ENCODE measurements at regions of chr12 and their contacts with region 1.

Region 1: GRCh38 chr12:56189176-56189917 is at the start of gene SMARCC2:
- DNase-seq: peak; percentile 95
- H3K4me3 ChIP-seq: peak within 1 kb of the TSS; percentile 83
- H3K27ac ChIP-seq: peak within 1 kb of the TSS; percentile 82
- H3K4me1 ChIP-seq: peaks cover 13% of the 10 kb centered on the region
- H3K27me3 ChIP-seq: no peaks in the 10 kb centered on the region
- CTCF ChIP-seq: peak; percentile 74
- total RNA-seq, gene SMARCC2: 133 and 140 TPM in 2 replicates

Region 2: GRCh38 chr12:56117778-56118687 is 71.3 kb before region 1 on chr12 and contains the start of gene ZC3H10:
- CTCF ChIA-PET with region 1: interaction called, 17 read pairs
- POLR2A ChIA-PET with region 1: no interaction called
- intact Hi-C with region 1: loop called (anchors 2 kb)
- DNase-seq: peak; percentile 99
- H3K4me3 ChIP-seq: peak within 1 kb of the TSS; percentile 71
- H3K27ac ChIP-seq: peak within 1 kb of the TSS; percentile 95
- H3K4me1 ChIP-seq: peaks cover 13% of the 10 kb centered on the region
- H3K27me3 ChIP-seq: no peaks in the 10 kb centered on the region
- CTCF ChIP-seq: peak; percentile 61; the same call in 1 of the 2 replicates
- total RNA-seq, gene ZC3H10: 11.8 and 14.4 TPM in 2 replicates

Region 3: GRCh38 chr12:56224102-56224701 is 34.9 kb after region 1 on chr12 and contains the start of gene NABP2:
- CTCF ChIA-PET with region 1: interaction called, 16 read pairs
- POLR2A ChIA-PET with region 1: no interaction called
- intact Hi-C with region 1: loop called (anchors 1 kb)
- DNase-seq: peak; percentile 99
- H3K4me3 ChIP-seq: peak within 1 kb of the TSS; percentile 65
- H3K27ac ChIP-seq: peak within 1 kb of the TSS; percentile 72
- H3K4me1 ChIP-seq: peaks cover 5% of the 10 kb centered on the region
- H3K27me3 ChIP-seq: no peaks in the 10 kb centered on the region
- CTCF ChIP-seq: peak; percentile 98
- total RNA-seq, gene NABP2: 67.5 and 73.2 TPM in 2 replicates

Region 4: GRCh38 chr12:56266693-56267442 is 77.5 kb after region 1 on chr12 and contains the start of gene COQ10A:
- CTCF ChIA-PET with region 1: no interaction called
- POLR2A ChIA-PET with region 1: no interaction called
- intact Hi-C with region 1: no loop called
- DNase-seq: peak; percentile 92
- H3K4me3 ChIP-seq: peak within 1 kb of the TSS; percentile 70
- H3K27ac ChIP-seq: peak within 1 kb of the TSS; percentile 86
- H3K4me1 ChIP-seq: peaks cover 3% of the 10 kb centered on the region
- H3K27me3 ChIP-seq: no peaks in the 10 kb centered on the region
- CTCF ChIP-seq: peak; percentile 62
- total RNA-seq, gene COQ10A: 13.6 and 17.0 TPM in 2 replicates

Region 5: DNA sequence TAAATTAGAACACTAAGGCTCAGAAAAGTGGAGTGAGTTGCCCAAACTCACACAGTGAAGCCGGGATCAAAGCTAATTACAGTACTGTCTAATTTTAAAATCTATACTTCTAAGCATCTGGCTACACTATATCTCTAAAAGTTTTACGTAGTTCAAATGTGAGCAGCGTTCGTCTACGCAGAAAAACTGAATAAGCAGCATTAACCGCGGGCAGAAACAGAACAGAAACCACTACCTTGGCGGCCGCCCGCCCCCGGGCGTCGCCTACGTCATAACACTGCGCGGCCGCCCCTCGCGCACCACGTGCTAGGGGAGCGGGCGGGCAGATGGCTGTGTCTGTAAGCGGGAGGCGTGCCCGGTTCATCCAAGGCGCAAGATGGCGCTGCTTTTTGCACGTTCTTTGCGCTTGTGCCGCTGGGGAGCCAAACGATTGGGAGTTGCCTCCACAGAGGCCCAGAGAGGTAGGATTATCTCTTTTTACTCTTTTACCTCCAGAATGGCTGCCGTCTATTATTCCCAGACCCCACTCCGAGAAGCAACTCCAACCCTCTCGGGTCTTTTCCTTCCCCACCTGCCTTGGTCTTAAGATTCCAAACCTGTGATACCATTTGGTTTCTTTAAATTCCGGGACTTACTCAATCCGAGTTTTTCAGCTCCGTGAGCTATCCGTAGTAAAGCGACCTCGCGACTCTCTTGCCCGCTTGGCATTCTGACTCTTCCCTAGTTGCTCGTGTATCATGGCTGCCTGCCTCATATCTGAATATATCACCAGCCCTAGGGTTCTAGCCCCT is 279.1 kb after region 1 on chr12 and contains the start of gene SPRYD4:
- CTCF ChIA-PET with region 1: interaction called, 7 read pairs
- POLR2A ChIA-PET with region 1: no interaction called
- intact Hi-C with region 1: loop called (anchors 1 kb)
- DNase-seq: peak; percentile 96
- H3K4me3 ChIP-seq: peak within 1 kb of the TSS; percentile 76
- H3K27ac ChIP-seq: peak within 1 kb of the TSS; percentile 94
- H3K4me1 ChIP-seq: peaks cover 7% of the 10 kb centered on the region
- H3K27me3 ChIP-seq: no peaks in the 10 kb centered on the region
- CTCF ChIP-seq: peak; percentile 60
- total RNA-seq, gene SPRYD4: 4.7 and 5.1 TPM in 2 replicates

Region 6: DNA sequence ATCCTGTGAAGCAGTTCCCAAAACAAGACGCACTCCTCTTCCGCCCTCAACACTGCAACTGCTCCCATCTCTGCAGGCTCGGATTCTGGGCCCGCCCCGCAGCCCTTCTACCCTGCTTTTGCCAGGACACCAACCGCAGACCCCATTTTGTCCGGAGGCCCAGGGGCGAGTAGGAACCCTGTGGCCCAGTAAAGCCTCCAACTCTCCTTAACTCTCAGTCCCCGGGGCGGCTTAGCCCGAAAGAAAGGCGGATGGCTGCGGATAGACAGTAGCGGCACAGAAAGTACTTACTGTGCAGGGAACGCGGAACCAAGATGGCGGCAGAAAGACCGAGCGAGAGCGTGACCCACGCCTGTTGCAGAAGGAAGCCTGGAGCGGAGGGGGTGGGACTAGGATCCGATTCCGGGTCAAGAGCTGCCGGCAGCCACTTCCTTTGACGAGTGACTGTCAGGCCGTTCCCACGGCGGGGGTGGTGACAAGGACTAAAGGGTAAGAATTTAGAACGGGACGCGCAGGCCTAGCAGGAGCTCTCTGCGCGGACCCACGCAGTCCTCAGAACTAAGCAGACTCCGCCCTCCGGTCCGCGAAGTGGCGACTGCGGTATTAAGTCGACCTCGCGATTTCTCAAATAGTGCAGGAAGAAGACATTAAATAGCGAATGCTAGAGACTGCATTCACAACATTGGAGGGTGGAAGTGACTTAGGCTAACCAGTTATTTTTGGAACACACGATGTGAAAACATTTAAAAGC is 535.8 kb after region 1 on chr12 and contains the start of gene NACA:
- CTCF ChIA-PET with region 1: no interaction called
- POLR2A ChIA-PET with region 1: no interaction called
- intact Hi-C with region 1: no loop called
- DNase-seq: peak; percentile 99
- H3K4me3 ChIP-seq: peak within 1 kb of the TSS; percentile 89
- H3K27ac ChIP-seq: peak within 1 kb of the TSS; percentile 96
- H3K4me1 ChIP-seq: peaks cover 34% of the 10 kb centered on the region
- H3K27me3 ChIP-seq: no peaks in the 10 kb centered on the region
- CTCF ChIP-seq: no peak
- total RNA-seq, gene NACA: 906 and 908 TPM in 2 replicates